ENCODE measurements at regions of chr6 and their contacts with region 1.

Region 1: GRCh38 chr6:98724537-98724936 is 109.8 kb upstream of the POU3F2 start:
- DNase-seq: no peak

Region 2: GRCh38 chr6:98146656-98147055 is 577.9 kb before region 1 on chr6:
- intact Hi-C with region 1: no loop called
- DNase-seq: no peak

Region 3: DNA sequence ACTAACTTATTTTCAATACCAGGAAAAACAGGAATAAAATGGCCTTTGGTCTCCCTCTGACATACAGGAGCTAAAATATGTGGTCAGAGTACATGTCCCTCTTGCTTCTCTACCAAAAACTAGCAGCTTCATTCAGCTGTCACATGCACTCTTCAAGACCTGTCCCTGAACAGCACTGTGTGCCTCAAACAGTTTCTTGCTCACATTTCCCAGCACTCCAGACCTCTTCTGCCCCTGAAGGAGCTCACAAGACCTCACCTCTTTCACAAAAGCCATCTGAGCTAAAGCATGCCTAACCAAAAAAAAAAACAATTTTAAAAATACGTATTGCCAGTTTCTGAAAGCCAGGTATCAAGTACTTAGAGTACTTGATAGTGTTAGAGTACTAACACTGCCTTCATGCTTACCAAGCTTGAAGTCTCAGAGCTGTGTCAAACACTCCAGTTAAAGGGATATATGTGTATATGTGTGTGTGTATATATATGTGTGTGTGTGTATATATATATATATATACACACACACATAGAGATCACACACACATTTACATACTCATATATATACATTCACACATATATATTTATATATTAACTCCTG is 38.4 kb before region 1 on chr6:
- intact Hi-C with region 1: loop called in 1 of 2 experiments (anchors 2 kb)
- DNase-seq: no peak

Region 4: DNA sequence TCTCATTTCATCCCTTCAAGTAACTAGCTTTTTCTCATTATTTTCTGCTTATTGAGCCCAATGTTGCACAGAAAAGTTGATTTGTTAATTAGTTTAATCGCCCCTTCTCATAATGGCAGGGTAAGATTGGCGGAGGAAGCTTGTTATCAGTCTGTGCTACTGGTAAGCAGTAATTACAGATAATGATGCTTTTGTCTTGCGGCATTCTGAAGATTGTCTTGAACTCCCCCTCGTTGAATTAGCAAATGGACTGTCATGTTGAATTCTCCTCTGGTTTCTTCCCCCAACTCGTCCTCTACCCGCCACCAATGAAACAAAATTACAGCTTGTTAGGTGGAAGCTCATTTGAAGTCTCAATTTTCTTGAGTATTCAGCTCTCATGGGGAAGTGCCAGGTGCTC is 921.4 kb after region 1 on chr6:
- intact Hi-C with region 1: no loop called
- DNase-seq: no peak

Measured in posterior vena cava (tissue), 2 donors.